MCF 10A (cell line): ENCODE measurements at regions of chr15 and their contacts with region 1.

Region 1: GRCh38 chr15:79989682-79990081 is 18.7 kb upstream of the BCL2A1 start:
- DNase-seq: peak; percentile 61
- H3K4me3 Mint-ChIP-seq: no peak overlapping the region
- H3K27ac Mint-ChIP-seq: no peak overlapping the region
- H3K4me1 Mint-ChIP-seq: peaks cover 4% of the 10 kb centered on the region
- H3K27me3 Mint-ChIP-seq: peaks cover 16% of the 10 kb centered on the region
- CTCF ChIP-seq: no peak

Region 2: GRCh38 chr15:79339564-79340314 is 649.9 kb before region 1 on chr15:
- CTCF ChIA-PET with region 1: interaction called, 6 read pairs
- POLR2A ChIA-PET with region 1: no interaction called
- intact Hi-C with region 1: loop called (anchors 1 kb)
- DNase-seq: peak; percentile 47
- H3K4me3 Mint-ChIP-seq: no peak overlapping the region
- H3K27ac Mint-ChIP-seq: no peak overlapping the region
- H3K4me1 Mint-ChIP-seq: no peaks in the 10 kb centered on the region
- H3K27me3 Mint-ChIP-seq: no peaks in the 10 kb centered on the region
- CTCF ChIP-seq: peak; percentile 72

Region 3: DNA sequence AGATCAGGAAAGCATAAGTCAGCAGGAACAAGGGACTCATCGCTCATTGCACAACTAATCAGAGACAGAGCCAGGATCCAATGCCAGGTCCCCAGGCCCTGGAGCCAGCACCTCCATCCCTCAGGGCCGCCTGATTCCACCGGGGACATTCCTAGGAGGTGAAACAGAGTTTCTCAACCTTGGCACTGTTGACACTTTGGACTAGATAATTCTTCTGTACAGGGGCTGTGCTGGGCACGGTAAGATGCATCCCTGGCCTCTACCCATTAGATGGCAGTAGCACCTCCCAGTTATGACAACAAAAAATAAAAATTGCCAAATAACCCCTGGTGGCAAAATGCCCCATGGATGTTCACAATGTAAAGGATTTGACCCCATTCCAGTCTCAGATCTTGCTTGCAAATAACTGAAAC is 220.6 kb before region 1 on chr15:
- CTCF ChIA-PET with region 1: interaction called, 10 read pairs
- POLR2A ChIA-PET with region 1: no interaction called
- intact Hi-C with region 1: loop called (anchors 1 kb)
- DNase-seq: peak; percentile 85
- H3K4me3 Mint-ChIP-seq: no peak overlapping the region
- H3K27ac Mint-ChIP-seq: no peak overlapping the region
- H3K4me1 Mint-ChIP-seq: peaks cover 12% of the 10 kb centered on the region
- H3K27me3 Mint-ChIP-seq: peaks cover 32% of the 10 kb centered on the region
- CTCF ChIP-seq: peak; percentile 60

Region 4: GRCh38 chr15:79896637-79897379 is 92.9 kb before region 1 on chr15 and contains the start of gene MTHFS:
- CTCF ChIA-PET with region 1: interaction called, 8 read pairs
- POLR2A ChIA-PET with region 1: no interaction called
- intact Hi-C with region 1: loop called (anchors 1 kb)
- DNase-seq: peak; percentile 75
- H3K4me3 Mint-ChIP-seq: peak within 1 kb of the TSS; percentile 84
- H3K27ac Mint-ChIP-seq: peak within 1 kb of the TSS; percentile 85
- H3K4me1 Mint-ChIP-seq: peaks cover 38% of the 10 kb centered on the region
- H3K27me3 Mint-ChIP-seq: no peaks in the 10 kb centered on the region
- CTCF ChIP-seq: peak; percentile 45
- total RNA-seq, gene MTHFS: 28.5 and 34.5 TPM in 2 replicates

Region 5: GRCh38 chr15:79923515-79924395 is 65.9 kb before region 1 on chr15:
- CTCF ChIA-PET with region 1: interaction called, 6 read pairs
- POLR2A ChIA-PET with region 1: interaction called, 5 read pairs
- intact Hi-C with region 1: loop called (anchors 2 kb)
- DNase-seq: peak; percentile 96
- H3K4me3 Mint-ChIP-seq: peak overlapping the region; percentile 97
- H3K27ac Mint-ChIP-seq: peak overlapping the region; percentile 97
- H3K4me1 Mint-ChIP-seq: peaks cover 8% of the 10 kb centered on the region
- H3K27me3 Mint-ChIP-seq: peaks cover under 1% of the 10 kb centered on the region
- CTCF ChIP-seq: no peak

Region 6: DNA sequence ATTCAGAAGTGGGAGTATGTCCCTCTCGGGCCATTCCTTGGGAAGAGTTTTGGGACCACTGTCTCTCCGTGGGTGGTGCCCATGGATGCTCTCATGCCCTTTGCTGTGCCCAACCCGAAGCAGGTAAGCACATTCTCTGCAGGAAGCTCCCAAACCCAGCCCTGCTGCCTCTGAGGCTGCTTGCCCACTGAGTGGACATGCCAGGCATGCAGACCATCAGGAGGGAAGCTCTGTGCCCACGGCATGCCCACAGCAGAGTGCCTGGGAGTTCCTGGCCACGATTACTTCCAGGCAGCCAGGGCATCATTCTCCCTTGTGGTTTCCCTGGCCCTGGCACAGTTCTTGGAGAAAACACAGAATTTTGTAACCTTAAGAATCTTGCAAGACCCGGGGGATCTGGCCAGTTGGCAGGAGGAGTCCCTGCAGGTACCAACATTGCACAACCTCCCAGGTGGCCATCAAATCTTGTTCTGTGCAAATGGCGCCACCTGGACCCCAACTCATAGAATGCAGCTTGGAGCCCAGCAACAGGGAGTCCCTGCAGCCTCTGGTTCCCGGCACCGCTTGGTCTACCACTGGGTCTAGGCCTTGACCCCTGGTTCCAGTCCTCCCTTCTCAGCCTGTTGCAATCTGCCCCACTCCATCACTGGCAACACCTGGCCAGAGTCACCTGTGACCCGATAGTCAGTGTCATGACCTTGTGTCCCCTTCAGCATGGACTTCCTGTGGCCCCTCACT is 183.5 kb after region 1 on chr15:
- CTCF ChIA-PET with region 1: interaction called, 4 read pairs
- POLR2A ChIA-PET with region 1: no interaction called
- intact Hi-C with region 1: loop called (anchors 1 kb)
- DNase-seq: peak; percentile 97
- H3K4me3 Mint-ChIP-seq: no peak overlapping the region
- H3K27ac Mint-ChIP-seq: no peak overlapping the region
- H3K4me1 Mint-ChIP-seq: peaks cover 46% of the 10 kb centered on the region
- H3K27me3 Mint-ChIP-seq: no peaks in the 10 kb centered on the region
- CTCF ChIP-seq: peak; percentile 87

Region 7: GRCh38 chr15:80429964-80430363 is 440.3 kb after region 1 on chr15:
- CTCF ChIA-PET with region 1: no interaction called
- POLR2A ChIA-PET with region 1: no interaction called
- intact Hi-C with region 1: no loop called
- DNase-seq: no peak
- H3K4me3 Mint-ChIP-seq: no peak overlapping the region
- H3K27ac Mint-ChIP-seq: no peak overlapping the region
- H3K4me1 Mint-ChIP-seq: no peaks in the 10 kb centered on the region
- H3K27me3 Mint-ChIP-seq: no peaks in the 10 kb centered on the region
- CTCF ChIP-seq: no peak